ENCODE measurements at regions of chr18 and their contacts with region 1.

Region 1: GRCh38 chr18:45197526-45197970 is 417.7 kb upstream of the SLC14A2 start:
- DNase-seq: peak; percentile 60
- H3K4me3 Mint-ChIP-seq: no peak overlapping the region
- H3K27ac Mint-ChIP-seq: no peak overlapping the region
- H3K4me1 Mint-ChIP-seq: peaks cover 9% of the 10 kb centered on the region
- H3K27me3 Mint-ChIP-seq: peaks cover 21% of the 10 kb centered on the region

Region 2: DNA sequence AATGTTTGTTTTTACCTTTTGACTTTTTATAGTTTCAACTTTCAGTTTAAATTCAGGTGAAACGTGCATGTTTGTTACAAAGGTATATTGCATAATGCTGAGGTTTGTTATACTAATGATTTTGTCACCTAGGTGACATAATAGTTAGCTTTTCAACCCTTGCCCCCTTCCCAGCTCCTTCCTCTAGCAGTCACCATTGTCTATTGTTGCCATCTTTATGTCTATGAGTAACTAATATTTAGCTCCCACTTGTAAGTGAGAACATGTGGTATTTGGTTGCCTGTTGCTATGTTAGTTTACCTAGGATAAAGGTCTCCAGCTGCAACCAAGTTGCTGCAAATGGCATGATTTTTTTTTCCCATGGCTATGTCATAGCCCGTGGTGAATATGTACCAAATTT is 839.1 kb before region 1 on chr18:
- CTCF ChIA-PET with region 1: no interaction called
- POLR2A ChIA-PET with region 1: no interaction called
- intact Hi-C with region 1: loop called (anchors 5 kb)
- DNase-seq: no peak
- H3K4me3 Mint-ChIP-seq: no peak overlapping the region
- H3K27ac Mint-ChIP-seq: no peak overlapping the region
- H3K4me1 Mint-ChIP-seq: no peaks in the 10 kb centered on the region
- H3K27me3 Mint-ChIP-seq: no peaks in the 10 kb centered on the region

Region 3: GRCh38 chr18:45169610-45170009 is 27.9 kb before region 1 on chr18:
- CTCF ChIA-PET with region 1: no interaction called
- POLR2A ChIA-PET with region 1: no interaction called
- intact Hi-C with region 1: loop called (anchors 1 kb)
- DNase-seq: no peak
- H3K4me3 Mint-ChIP-seq: no peak overlapping the region
- H3K27ac Mint-ChIP-seq: no peak overlapping the region
- H3K4me1 Mint-ChIP-seq: no peaks in the 10 kb centered on the region
- H3K27me3 Mint-ChIP-seq: no peaks in the 10 kb centered on the region

Region 4: GRCh38 chr18:45402485-45403056 is 205.0 kb after region 1 on chr18:
- CTCF ChIA-PET with region 1: no interaction called
- POLR2A ChIA-PET with region 1: no interaction called
- intact Hi-C with region 1: loop called (anchors 5 kb)
- DNase-seq: no peak
- H3K4me3 Mint-ChIP-seq: no peak overlapping the region
- H3K27ac Mint-ChIP-seq: no peak overlapping the region
- H3K4me1 Mint-ChIP-seq: peaks cover 2% of the 10 kb centered on the region
- H3K27me3 Mint-ChIP-seq: peaks cover 10% of the 10 kb centered on the region

Measured in activated CD4-positive, alpha-beta memory T cell treated with anti-CD3 and anti-CD28 coated beads for 36 hours (primary cell).